ENCODE measurements at regions of chr2 and their contacts with region 1.

Region 1: DNA sequence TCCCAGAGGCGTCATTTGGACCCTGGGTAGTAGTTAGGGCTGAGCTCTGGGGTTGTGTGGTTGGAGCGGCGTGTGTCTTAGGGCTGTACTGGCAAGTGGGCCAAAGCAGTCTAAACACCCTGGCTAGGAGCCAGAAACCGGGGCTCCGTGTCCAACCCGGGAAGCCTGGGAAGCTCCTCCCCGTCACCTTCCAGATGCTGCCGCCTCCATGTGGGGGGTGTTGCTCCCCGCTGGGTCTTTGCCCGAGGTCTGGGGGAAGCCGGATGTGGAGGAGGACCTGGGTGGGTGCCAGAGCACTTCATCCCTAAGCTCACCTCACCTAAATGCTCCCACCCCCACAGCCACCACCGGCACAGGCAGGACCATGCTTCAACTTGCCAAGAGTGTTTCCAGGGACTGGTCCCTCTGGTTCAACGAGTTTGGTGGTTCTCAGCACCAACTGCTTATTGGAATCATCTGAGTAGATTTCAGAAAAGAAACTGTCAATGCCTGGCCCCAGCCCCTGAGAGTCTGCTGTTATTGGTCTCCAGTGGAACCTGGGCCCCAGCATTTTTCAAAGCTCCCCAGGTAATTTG is 25.5 kb downstream of the TET3 start:
- DNase-seq: peak; percentile 88 to 94
- H3K4me3 ChIP-seq: no peak overlapping the region; the same call in 1 of the 2 replicates
- H3K27ac ChIP-seq: peak overlapping the region; percentile 24; the same call in 1 of the 2 replicates
- H3K4me1 ChIP-seq: peaks cover 36% of the 10 kb centered on the region
- H3K27me3 ChIP-seq: no peaks in the 10 kb centered on the region
- CTCF ChIP-seq: no peak

Region 2: GRCh38 chr2:73851274-73851673 is 158.9 kb before region 1 on chr2:
- CTCF ChIA-PET with region 1: interaction called, 10 read pairs
- POLR2A ChIA-PET with region 1: no interaction called
- intact Hi-C with region 1: no loop called
- DNase-seq: peak in 1 of 2 experiments; percentile 5
- H3K4me3 ChIP-seq: no peak overlapping the region
- H3K27ac ChIP-seq: no peak overlapping the region
- H3K4me1 ChIP-seq: peaks cover 9% of the 10 kb centered on the region
- H3K27me3 ChIP-seq: no peaks in the 10 kb centered on the region
- CTCF ChIP-seq: peak; percentile 66

Region 3: DNA sequence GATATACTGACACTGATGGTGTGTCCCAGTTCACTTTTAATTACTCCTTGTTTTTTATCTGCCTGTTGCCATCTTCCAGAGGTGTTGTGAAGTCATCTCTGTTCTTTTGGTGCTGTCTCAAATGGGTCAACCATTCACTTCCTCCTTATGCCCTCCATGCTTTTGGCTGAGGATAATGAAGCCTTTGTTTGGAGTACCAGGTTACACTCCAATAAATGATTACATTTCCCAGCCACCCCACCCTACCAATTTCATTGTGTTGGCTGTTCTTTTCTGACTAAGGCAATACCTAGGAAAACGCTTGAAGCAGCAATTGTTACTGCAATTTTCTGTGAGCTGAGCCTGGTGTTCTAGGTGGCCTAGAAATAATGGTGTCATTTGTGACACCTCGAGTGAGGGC is 147.2 kb before region 1 on chr2:
- CTCF ChIA-PET with region 1: no interaction called
- POLR2A ChIA-PET with region 1: no interaction called
- intact Hi-C with region 1: no loop called
- DNase-seq: no peak
- H3K4me3 ChIP-seq: no peak overlapping the region
- H3K27ac ChIP-seq: no peak overlapping the region
- H3K4me1 ChIP-seq: 0 out of 2 replicates have a peak, but pooled peaks cover 10% of the 10 kb centered on the region
- H3K27me3 ChIP-seq: no peaks in the 10 kb centered on the region
- CTCF ChIP-seq: no peak

Region 4: GRCh38 chr2:73985308-73986084 is 24.7 kb before region 1 on chr2:
- CTCF ChIA-PET with region 1: no interaction called
- POLR2A ChIA-PET with region 1: no interaction called
- intact Hi-C with region 1: loop called (anchors 1 kb)
- DNase-seq: peak in 1 of 2 experiments; percentile 17
- H3K4me3 ChIP-seq: peak overlapping the region; percentile 58
- H3K27ac ChIP-seq: peak overlapping the region; percentile 40; the same call in 1 of the 2 replicates
- H3K4me1 ChIP-seq: peaks cover 73% of the 10 kb centered on the region
- H3K27me3 ChIP-seq: no peaks in the 10 kb centered on the region
- CTCF ChIP-seq: no peak

Region 5: GRCh38 chr2:74045454-74045853 is 35.3 kb after region 1 on chr2:
- CTCF ChIA-PET with region 1: no interaction called
- POLR2A ChIA-PET with region 1: interaction called, 36 read pairs
- intact Hi-C with region 1: no loop called
- DNase-seq: no peak
- H3K4me3 ChIP-seq: no peak overlapping the region
- H3K27ac ChIP-seq: no peak overlapping the region
- H3K4me1 ChIP-seq: no peaks in the 10 kb centered on the region
- H3K27me3 ChIP-seq: no peaks in the 10 kb centered on the region
- CTCF ChIP-seq: no peak

Region 6: GRCh38 chr2:74250189-74250631 is 240.0 kb after region 1 on chr2:
- CTCF ChIA-PET with region 1: no interaction called
- POLR2A ChIA-PET with region 1: no interaction called
- intact Hi-C with region 1: no loop called
- DNase-seq: no peak
- H3K4me3 ChIP-seq: no peak overlapping the region
- H3K27ac ChIP-seq: no peak overlapping the region
- H3K4me1 ChIP-seq: no peaks in the 10 kb centered on the region
- H3K27me3 ChIP-seq: no peaks in the 10 kb centered on the region
- CTCF ChIP-seq: peak; percentile 90

Region 7: DNA sequence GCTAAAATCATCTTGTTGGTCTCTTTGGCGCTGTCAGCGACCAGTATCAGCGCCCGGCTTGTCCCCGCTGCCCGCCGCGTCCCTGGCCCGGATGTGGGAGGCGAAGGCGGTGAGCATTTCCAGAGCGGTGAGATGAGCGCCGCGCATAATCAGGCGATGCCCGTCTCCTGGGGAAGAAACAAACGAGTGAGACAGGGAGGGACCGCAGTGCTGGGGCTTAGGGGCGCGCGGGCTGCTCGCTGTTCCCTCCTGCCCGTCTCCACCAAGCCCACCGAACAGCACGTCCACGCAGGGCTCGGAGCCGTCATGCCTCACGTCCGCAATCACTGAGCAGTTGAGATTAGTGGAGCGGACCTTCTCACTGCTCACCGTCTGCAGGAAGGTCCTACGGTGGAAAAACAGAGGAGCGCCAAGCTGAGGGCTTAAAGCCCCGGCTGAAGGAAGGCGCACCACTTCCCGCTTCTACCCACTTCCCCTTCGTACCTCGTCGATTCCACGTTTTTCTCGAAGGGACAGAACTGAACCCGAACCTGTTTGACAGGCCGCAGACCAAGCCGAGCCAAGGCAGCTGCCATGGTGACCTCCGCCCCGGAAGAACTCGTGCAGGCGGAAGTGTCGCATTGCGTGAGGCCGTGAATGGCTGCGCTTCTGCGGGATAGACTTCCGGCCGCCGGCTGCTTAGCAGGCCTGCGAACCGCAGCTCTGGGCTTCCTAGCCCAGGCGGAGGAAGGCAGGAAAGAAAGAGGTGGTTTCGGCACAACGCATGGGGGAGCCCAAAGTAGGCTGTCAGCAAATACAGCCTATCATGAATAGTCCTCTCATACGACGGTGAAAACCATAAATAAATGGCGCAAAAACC is 462.1 kb after region 1 on chr2 and contains the start of gene MRPL53:
- CTCF ChIA-PET with region 1: interaction called, 11 read pairs
- POLR2A ChIA-PET with region 1: no interaction called
- intact Hi-C with region 1: no loop called
- DNase-seq: peak; percentile 91 to 93
- H3K4me3 ChIP-seq: peak within 1 kb of the TSS; percentile 89
- H3K27ac ChIP-seq: peak within 1 kb of the TSS; percentile 74
- H3K4me1 ChIP-seq: peaks cover 9% of the 10 kb centered on the region
- H3K27me3 ChIP-seq: no peaks in the 10 kb centered on the region
- CTCF ChIP-seq: no peak
- total RNA-seq, gene MRPL53: 42.9 and 51.1 TPM in 2 replicates

Measured in PC-9 (cell line).